ENCODE measurements at regions of chr21 and their contacts with region 1.

Region 1: DNA sequence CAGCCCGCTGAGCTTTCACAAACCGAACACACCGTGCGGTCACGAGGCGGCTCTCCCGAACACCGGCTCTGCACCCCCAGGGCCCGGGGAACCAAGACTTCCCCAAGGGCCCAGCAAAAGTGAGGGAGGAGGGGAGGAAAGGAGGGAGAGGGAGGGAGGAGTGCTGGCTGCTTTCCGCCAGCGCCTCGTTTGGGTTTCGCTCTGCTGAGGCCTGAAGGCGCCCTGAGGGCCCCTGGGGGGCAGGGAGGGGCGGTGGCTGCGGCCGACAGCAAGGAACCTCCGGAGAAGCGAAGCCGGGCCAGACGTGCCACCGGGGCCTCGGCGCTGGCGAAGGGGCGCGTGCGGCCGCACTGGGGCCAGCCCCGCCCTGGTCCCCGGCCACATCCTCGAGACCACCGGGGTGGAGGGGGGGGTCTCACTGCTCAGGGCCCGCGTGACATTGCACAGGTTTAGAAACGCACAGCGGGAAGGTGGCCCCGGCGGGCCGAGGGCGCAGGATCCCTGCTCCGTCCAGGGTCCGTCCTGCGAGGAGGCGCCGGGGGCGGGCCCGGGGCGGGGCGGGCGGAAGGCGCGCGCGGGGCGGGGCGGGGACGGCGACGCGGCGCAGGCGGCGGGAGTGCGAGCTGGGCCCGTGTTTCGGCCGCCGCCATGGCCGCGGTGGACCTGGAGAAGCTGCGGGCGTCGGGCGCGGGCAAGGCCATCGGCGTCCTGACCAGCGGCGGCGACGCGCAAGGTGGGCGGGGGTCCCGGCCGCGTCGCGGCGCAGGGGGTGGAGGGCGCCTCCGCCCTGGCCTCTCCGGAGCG is at the start of gene PFKL:
- DNase-seq: peak; percentile 82
- ATAC-seq: peak; percentile 63
- H3K4me3 Mint-ChIP-seq: peak within 1 kb of the TSS; percentile 85
- H3K27ac Mint-ChIP-seq: peak within 1 kb of the TSS; percentile 96
- H3K4me1 Mint-ChIP-seq: peaks cover 51% of the 10 kb centered on the region
- H3K27me3 Mint-ChIP-seq: no peaks in the 10 kb centered on the region
- total RNA-seq, gene PFKL: 167 to 202 TPM

Region 2: DNA sequence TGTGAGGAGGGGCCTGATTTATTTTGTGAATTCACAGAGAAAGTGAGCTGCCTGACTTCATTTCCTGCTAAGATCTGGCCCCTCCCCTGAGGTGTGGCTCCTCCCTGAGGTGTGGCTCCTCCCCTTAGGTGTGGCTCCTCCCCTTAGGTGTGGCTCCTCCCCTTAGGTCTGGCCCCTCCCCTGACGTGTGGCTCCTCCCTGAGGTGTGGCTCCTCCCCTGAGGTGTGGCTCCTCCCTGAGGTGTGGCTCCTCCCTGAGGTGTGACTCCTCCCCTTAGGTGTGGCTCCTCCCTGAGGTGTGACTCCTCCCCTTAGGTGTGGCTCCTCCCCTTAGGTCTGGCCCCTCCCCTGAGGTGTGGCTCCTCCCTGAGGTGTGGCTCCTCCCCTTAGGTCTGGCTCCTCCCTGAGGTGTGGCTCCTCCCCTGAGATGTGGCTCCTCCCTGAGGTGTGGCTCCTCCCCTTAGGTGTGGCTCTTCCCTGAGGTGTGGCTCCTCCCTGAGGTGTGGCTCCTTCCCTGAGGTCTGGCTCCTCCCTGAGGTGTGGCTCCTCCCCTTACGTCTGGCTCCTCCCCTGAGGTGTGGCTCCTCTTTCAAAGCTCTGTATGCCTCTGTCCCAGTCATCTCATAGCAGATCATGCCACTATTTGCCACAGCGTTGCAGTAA is 128.8 kb after region 1 on chr21:
- CTCF ChIA-PET with region 1: no interaction called
- POLR2A ChIA-PET with region 1: no interaction called
- intact Hi-C with region 1: loop called in 1 of 2 experiments (anchors 1 kb)
- DNase-seq: peak; percentile 71
- ATAC-seq: peak; percentile 77
- H3K4me3 Mint-ChIP-seq: no peak overlapping the region
- H3K27ac Mint-ChIP-seq: no peak overlapping the region
- H3K4me1 Mint-ChIP-seq: no peaks in the 10 kb centered on the region
- H3K27me3 Mint-ChIP-seq: no peaks in the 10 kb centered on the region

Region 3: GRCh38 chr21:44454747-44455523 is 155.3 kb after region 1 on chr21 and contains the start of gene LRRC3:
- CTCF ChIA-PET with region 1: no interaction called
- POLR2A ChIA-PET with region 1: no interaction called
- intact Hi-C with region 1: loop called in 1 of 2 experiments (anchors 1 kb)
- DNase-seq: peak; percentile 95
- ATAC-seq: peak; percentile 74
- H3K4me3 Mint-ChIP-seq: peak within 1 kb of the TSS; percentile 67
- H3K27ac Mint-ChIP-seq: no peak within 1 kb of the TSS
- H3K4me1 Mint-ChIP-seq: no peaks in the 10 kb centered on the region
- H3K27me3 Mint-ChIP-seq: peaks cover 15% of the 10 kb centered on the region
- total RNA-seq, gene LRRC3: 2.7 to 2.9 TPM

Region 4: DNA sequence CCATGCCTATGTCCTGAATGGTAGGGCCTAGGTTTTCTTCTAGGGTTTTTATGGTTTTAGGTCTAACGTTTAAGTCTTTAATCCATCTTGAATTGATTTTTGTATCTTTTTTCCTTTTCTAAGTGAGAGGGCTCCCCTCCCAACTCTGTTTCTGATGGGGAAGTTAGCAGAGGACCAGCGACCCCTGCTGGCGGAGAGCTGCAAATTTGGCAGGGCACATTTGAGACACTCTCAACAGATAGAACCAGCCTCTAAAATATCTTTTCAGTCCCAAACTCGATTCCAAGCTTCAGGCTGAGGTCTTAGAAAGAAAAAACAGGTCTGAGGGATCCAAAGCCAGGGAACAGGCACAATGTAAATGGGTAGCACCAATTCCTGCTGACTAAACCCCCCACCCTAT is 188.2 kb after region 1 on chr21:
- CTCF ChIA-PET with region 1: interaction called, 3 read pairs
- POLR2A ChIA-PET with region 1: no interaction called
- intact Hi-C with region 1: loop called in 1 of 2 experiments (anchors 5 kb)
- DNase-seq: peak; percentile 83
- ATAC-seq: peak; percentile 44
- H3K4me3 Mint-ChIP-seq: no peak overlapping the region
- H3K27ac Mint-ChIP-seq: no peak overlapping the region
- H3K4me1 Mint-ChIP-seq: peaks cover 5% of the 10 kb centered on the region
- H3K27me3 Mint-ChIP-seq: peaks cover 2% of the 10 kb centered on the region

Region 5: DNA sequence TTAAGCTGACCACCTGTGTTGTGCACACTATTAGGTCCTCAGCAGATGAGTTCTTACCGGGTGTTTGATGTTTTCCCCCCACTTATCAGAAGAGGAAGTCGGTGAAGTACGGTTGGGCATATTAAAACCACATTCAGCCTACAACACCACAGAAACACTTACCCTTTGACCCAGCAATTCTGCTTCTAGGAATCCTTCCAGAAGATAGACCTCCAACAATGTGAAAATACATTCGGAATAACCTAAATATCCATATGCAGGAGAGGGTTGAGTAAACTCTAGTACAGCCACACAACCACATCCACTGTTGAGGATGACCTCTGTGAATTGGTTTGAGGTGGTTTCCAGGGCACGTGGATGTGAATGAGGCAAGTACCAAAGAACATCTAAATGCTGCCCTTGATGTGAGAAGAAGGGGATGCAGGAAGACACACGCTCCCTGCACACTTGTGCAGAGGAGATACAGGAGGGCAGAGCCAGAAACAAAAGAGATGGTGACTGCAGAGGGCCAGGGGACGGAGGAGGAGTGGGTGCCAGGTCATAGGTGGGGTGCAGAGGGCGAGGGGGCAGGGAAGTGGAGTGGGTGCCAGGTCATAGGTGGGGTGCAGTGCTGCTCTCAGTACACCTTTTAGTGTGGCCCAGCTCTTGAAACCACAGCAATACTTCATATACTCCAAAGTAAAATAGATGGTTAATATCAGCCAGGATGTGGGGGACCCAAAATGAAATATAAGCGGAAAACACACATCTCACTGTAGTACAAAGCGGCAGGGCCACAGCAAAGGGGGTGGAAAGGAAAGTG is 787.6 kb after region 1 on chr21:
- CTCF ChIA-PET with region 1: no interaction called
- POLR2A ChIA-PET with region 1: no interaction called
- intact Hi-C with region 1: no loop called
- DNase-seq: peak; percentile 30
- ATAC-seq: peak; percentile 21
- H3K4me3 Mint-ChIP-seq: no peak overlapping the region
- H3K27ac Mint-ChIP-seq: peak overlapping the region; percentile 45
- H3K4me1 Mint-ChIP-seq: peaks cover 69% of the 10 kb centered on the region
- H3K27me3 Mint-ChIP-seq: no peaks in the 10 kb centered on the region

Region 6: GRCh38 chr21:45248893-45249381 is 949.3 kb after region 1 on chr21:
- CTCF ChIA-PET with region 1: no interaction called
- POLR2A ChIA-PET with region 1: no interaction called
- intact Hi-C with region 1: no loop called
- DNase-seq: no peak
- ATAC-seq: no peak
- H3K4me3 Mint-ChIP-seq: no peak overlapping the region
- H3K27ac Mint-ChIP-seq: no peak overlapping the region
- H3K4me1 Mint-ChIP-seq: no peaks in the 10 kb centered on the region
- H3K27me3 Mint-ChIP-seq: peaks cover 2% of the 10 kb centered on the region

Measured in activated CD4-positive, alpha-beta T cell treated with anti-CD3 and anti-CD28 coated beads for 36 hours (primary cell).